ENCODE measurements at regions of chr4 and their contacts with region 1.

Region 1: GRCh38 chr4:140523857-140524742 is at the start of gene ELMOD2:
- DNase-seq: peak; percentile 98
- H3K4me3 Mint-ChIP-seq: peak within 1 kb of the TSS; percentile 84
- H3K27ac Mint-ChIP-seq: peak within 1 kb of the TSS; percentile 54
- H3K4me1 Mint-ChIP-seq: peaks cover 23% of the 10 kb centered on the region
- H3K27me3 Mint-ChIP-seq: no peaks in the 10 kb centered on the region
- total RNA-seq, gene ELMOD2: 15.5 to 17.3 TPM

Region 2: GRCh38 chr4:139015269-139015947 is 1508.7 kb before region 1 on chr4 and contains the start of gene NOCT:
- CTCF ChIA-PET with region 1: no interaction called
- POLR2A ChIA-PET with region 1: no interaction called
- intact Hi-C with region 1: loop called (anchors 2 kb)
- DNase-seq: peak; percentile 97
- H3K4me3 Mint-ChIP-seq: peak within 1 kb of the TSS; percentile 89
- H3K27ac Mint-ChIP-seq: peak within 1 kb of the TSS; percentile 94
- H3K4me1 Mint-ChIP-seq: peaks cover 45% of the 10 kb centered on the region
- H3K27me3 Mint-ChIP-seq: no peaks in the 10 kb centered on the region
- total RNA-seq, gene NOCT: 12.2 to 14.3 TPM

Region 3: GRCh38 chr4:140373328-140374129 is 150.6 kb before region 1 on chr4 and contains the start of gene SCOC:
- CTCF ChIA-PET with region 1: interaction called, 15 read pairs
- POLR2A ChIA-PET with region 1: interaction called, 3 read pairs
- intact Hi-C with region 1: loop called (anchors 1 kb)
- DNase-seq: peak; percentile 99
- H3K4me3 Mint-ChIP-seq: no peak within 1 kb of the TSS
- H3K27ac Mint-ChIP-seq: no peak within 1 kb of the TSS
- H3K4me1 Mint-ChIP-seq: peaks cover 32% of the 10 kb centered on the region
- H3K27me3 Mint-ChIP-seq: no peaks in the 10 kb centered on the region
- total RNA-seq, gene SCOC: 46.9 to 48.4 TPM

Region 4: GRCh38 chr4:140609548-140610425 is 85.7 kb after region 1 on chr4:
- CTCF ChIA-PET with region 1: interaction called, 5 read pairs
- POLR2A ChIA-PET with region 1: no interaction called
- intact Hi-C with region 1: loop called (anchors 5 kb)
- DNase-seq: no peak
- H3K4me3 Mint-ChIP-seq: no peak overlapping the region
- H3K27ac Mint-ChIP-seq: no peak overlapping the region
- H3K4me1 Mint-ChIP-seq: no peaks in the 10 kb centered on the region
- H3K27me3 Mint-ChIP-seq: peaks cover 8% of the 10 kb centered on the region

Region 5: GRCh38 chr4:140851032-140851636 is 327.0 kb after region 1 on chr4:
- CTCF ChIA-PET with region 1: no interaction called
- POLR2A ChIA-PET with region 1: no interaction called
- intact Hi-C with region 1: loop called (anchors 5 kb)
- DNase-seq: peak; percentile 16
- H3K4me3 Mint-ChIP-seq: no peak overlapping the region
- H3K27ac Mint-ChIP-seq: no peak overlapping the region
- H3K4me1 Mint-ChIP-seq: no peaks in the 10 kb centered on the region
- H3K27me3 Mint-ChIP-seq: peaks cover 25% of the 10 kb centered on the region

Measured in activated CD4-positive, alpha-beta memory T cell treated with anti-CD3 and anti-CD28 coated beads for 36 hours (primary cell).